Head of caudate nucleus (tissue), 42 donors: ENCODE measurements at regions of chr9 and their contacts with region 1.

Region 1: DNA sequence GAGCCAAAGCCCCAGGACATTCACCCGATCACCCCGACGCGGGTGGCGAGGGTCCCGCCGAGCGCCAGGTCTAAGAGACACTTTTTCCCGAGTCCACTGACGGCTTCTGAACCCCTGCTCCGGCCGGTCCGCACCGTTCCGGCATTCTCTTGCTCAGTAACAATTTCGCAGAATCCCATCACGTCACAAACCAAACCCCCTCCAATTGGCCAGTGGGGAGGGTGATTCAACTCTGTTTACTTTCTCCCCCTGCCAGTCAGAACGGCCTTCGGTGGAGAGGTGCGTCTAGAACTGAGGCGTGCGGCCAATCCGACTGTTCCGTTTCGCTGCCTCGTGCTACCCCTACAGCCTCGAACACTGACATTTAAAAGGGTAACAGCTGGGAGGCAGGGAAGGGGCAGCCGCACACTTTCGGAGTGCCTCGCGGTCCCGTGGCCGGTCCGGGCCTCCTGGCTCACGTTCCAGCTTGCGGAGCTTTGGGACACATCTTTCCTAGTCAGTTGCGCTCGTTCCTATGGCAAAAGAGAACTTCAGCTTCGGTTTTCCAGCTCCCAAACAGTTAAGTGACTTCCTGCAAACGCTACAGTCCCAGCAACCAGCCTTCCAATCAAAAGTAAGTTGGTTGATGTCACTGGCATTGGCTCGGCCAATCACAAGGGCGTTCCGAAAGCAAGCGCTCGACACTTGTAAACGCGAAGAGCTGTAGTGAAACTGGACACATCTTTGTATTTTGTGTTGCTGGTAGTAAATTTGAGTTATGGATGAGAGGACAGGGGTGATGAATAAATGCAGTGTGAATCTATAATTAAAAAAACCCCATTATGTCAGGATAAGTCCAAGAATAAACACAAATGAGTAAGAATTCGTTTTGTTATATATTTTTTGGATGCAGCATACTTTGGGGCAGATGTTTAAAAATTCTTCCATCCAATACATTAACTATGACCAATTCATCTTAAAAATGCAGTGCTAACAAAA is at the start of gene KLF9:
- DNase-seq: peak; percentile 83 to 98 (median 93)

Region 2: GRCh38 chr9:70258692-70259511 is 155.2 kb before region 1 on chr9 and contains the start of gene SMC5:
- intact Hi-C with region 1: loop called (anchors 10 kb)
- DNase-seq: peak; percentile 70 to 96 (median 90)

Region 3: DNA sequence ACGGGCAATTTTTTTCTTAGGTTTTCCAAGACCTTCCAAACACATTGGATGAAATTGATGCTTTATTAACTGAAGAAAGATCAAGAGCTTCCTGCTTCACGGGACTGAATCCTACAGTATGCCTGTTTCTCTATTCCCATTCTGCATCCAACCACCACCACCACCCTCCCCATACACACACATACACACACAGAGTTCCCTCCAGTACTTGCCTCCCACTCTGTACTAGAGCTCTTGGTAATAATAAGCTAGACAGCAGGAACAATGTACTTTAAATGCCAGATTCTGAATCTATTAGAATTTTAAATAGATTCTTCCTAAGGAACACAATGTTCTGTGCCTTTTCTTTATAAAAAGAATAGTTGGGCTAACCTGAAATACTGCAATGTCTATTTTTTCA is 67.0 kb before region 1 on chr9:
- intact Hi-C with region 1: loop called (anchors 5 kb)
- DNase-seq: peak in 31 of 42 donors; percentile 11 to 84 (median 49)

Region 4: GRCh38 chr9:70382709-70383605 is 31.1 kb before region 1 on chr9:
- intact Hi-C with region 1: no loop called
- DNase-seq: no peak

Region 5: DNA sequence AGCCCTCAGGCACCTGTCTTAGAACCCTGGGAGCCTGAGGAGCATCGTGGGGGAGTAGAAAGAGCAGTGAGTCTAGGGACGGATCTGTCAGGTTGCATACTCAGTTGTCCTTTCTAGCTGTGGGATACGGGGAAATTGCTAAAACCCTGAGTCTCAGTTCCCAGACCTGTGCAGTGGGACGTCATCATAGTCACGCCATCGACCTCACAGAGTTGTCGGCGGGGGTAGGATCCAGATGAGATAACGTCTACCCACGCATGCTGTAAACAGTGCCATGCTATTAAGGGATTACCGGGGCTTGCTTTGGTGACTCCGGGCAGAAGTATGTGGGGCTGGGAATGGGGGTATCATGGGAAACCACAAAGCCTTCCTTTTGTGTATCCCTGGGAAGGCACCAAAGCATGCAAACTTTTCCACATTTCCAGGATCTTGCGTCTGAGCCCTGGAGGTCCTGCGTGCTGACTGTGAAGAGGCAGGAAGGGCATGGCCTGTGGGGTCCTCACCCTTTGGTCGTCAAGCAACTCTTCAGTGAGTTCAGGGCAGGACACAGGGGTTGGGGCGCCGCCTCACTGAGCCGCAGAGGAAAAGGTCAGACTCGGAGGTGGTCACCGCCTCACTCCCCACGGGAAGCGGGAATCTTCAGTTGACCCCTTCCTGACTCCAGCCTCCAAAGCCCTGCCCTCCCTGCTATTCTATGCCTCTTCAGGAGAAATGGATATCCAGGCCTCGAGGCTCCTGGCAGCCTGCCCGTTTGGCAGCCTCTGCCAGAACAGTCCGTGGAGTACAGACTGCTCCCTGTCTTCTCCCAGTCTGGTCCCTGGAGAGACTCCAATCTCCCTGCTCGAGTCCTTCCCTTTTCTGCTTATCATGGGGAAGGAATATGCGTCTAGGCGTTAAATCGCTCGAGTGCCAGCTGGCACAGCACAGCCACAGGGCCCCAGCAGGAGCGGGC is 187.2 kb after region 1 on chr9:
- intact Hi-C with region 1: no loop called
- DNase-seq: peak; percentile 53 to 94 (median 87)